Activated T-helper 1 cell treated with anti-CD3 and anti-CD28 coated beads, Interleukin-12 subunit alpha, Interleukin-12 subunit beta, Interleukin-2, Interleukin-4 antibody, amounts not matched to agents 30 ng/mL and 10 ng/mL and 1 ng/mL, durations not matched to agents 14 hours and 24 hours and 36 hours (primary cell): ENCODE measurements at regions of chr1 and their contacts with region 1.

Region 1: DNA sequence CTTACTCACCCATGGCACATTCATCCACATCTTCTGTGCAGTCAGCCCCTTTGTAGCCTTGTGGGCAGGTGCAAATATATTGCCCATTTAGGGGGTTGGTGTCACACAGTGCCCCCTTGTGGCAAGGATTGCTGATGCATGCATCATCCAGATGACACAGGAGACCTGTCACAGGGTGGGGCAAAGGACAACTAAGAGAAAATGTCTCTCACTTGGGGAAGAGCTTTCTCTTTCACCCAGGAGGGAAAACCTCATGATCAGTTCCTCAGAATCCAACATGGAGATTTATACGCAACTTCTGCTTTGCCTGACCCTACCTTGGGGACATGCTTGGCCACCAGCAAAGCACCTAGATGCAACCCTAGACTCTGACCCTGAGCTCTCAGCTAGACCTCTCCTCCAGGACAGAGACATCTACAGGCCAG is 71.8 kb upstream of the ADAM30 start:
- DNase-seq: peak; percentile 67
- H3K4me3 Mint-ChIP-seq: no peak overlapping the region
- H3K27ac Mint-ChIP-seq: peak overlapping the region; percentile 64
- H3K4me1 Mint-ChIP-seq: peaks cover 15% of the 10 kb centered on the region
- H3K27me3 Mint-ChIP-seq: no peaks in the 10 kb centered on the region

Region 2: DNA sequence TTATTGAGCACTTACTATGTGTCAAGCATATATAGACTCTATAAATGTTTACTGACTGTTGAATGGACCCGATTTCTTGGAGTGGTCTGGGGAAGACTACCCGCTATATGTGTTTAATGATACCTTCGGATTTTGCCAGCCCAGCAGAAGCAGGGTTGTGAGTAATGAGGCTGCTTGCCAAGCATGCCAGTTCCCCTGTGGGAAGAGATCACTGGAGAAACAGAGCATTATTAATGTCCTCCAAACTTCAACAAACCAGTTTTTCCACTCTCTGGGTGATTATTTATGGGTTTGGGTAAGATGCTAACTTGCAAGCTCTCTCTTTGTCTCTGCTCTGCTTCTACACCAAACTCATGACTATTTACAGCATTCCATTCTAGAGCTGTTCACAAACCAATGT is 281.4 kb before region 1 on chr1:
- intact Hi-C with region 1: no loop called
- DNase-seq: no peak
- H3K4me3 Mint-ChIP-seq: no peak overlapping the region
- H3K27ac Mint-ChIP-seq: no peak overlapping the region
- H3K4me1 Mint-ChIP-seq: no peaks in the 10 kb centered on the region
- H3K27me3 Mint-ChIP-seq: peaks cover 23% of the 10 kb centered on the region

Region 3: DNA sequence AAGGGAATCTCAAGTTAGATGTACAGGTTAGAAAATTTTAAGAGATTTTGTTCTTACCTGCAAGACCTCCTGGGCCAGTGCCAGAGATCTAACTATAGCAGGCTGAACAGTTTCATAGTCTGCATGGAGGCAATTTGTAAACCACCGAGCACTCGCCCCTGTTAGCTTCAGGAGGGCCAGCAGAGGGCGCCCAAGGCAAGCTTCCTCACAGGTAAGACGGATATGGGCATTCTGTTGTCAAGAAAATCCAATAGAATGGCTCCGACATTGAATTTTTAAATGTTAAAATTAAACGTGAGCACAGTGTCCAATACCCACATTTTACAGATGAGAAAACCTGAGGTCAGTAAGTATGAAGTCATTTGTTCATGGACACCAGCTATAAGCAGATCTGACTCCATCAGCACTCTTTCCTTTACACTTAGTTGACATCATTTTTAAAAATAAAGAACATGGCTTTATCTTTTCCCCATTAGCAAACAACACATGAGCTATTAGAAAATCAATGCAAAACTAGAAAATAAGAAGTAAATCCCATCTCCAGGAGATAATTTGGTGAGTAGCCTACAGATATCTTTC is 159.0 kb before region 1 on chr1:
- intact Hi-C with region 1: loop called (anchors 5 kb)
- DNase-seq: peak; percentile 53
- H3K4me3 Mint-ChIP-seq: no peak overlapping the region
- H3K27ac Mint-ChIP-seq: no peak overlapping the region
- H3K4me1 Mint-ChIP-seq: peaks cover 12% of the 10 kb centered on the region
- H3K27me3 Mint-ChIP-seq: peaks cover 35% of the 10 kb centered on the region

Region 4: GRCh38 chr1:119893238-119893791 is 74.8 kb before region 1 on chr1:
- intact Hi-C with region 1: loop called (anchors 5 kb)
- DNase-seq: no peak
- H3K4me3 Mint-ChIP-seq: peak overlapping the region; percentile 19
- H3K27ac Mint-ChIP-seq: peak overlapping the region; percentile 26
- H3K4me1 Mint-ChIP-seq: peaks cover 35% of the 10 kb centered on the region
- H3K27me3 Mint-ChIP-seq: peaks cover 8% of the 10 kb centered on the region

Region 5: DNA sequence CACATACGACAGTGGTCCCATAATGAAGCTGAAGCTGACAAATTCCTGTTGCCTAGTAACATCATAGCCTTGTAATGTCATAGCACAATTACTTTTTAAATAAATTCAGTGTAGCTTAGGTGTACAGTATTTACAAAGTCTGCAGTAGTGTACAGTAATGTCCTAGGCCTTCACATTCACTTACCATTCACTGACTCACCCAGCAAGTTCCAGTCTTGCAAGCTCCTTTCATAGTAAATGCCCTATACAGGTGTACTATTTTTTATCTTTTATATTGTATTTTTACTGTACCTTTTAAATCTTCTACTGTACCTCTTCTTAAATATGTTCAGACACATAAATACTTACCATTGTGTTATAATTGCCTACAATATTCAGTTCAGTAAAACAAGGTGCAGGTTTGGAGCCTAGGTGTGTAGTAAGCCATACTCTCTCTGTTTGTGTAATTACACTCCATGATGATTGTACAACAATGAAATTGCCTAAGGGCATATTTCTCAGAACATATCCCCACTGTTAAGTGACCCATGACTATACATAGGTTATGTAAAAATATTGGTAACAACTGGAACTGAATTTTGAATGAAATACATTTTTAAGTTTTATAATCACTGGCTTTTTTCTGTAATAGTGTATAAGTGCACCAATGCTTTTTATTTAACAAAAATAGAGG is 38.3 kb before region 1 on chr1:
- intact Hi-C with region 1: no loop called
- DNase-seq: no peak
- H3K4me3 Mint-ChIP-seq: no peak overlapping the region
- H3K27ac Mint-ChIP-seq: no peak overlapping the region
- H3K4me1 Mint-ChIP-seq: no peaks in the 10 kb centered on the region
- H3K27me3 Mint-ChIP-seq: no peaks in the 10 kb centered on the region

Region 6: GRCh38 chr1:119948342-119949214 is 19.5 kb before region 1 on chr1:
- intact Hi-C with region 1: loop called (anchors 2 kb)
- DNase-seq: peak; percentile 54
- H3K4me3 Mint-ChIP-seq: no peak overlapping the region
- H3K27ac Mint-ChIP-seq: no peak overlapping the region
- H3K4me1 Mint-ChIP-seq: peaks cover 14% of the 10 kb centered on the region
- H3K27me3 Mint-ChIP-seq: no peaks in the 10 kb centered on the region